Caco-2 (cell line): ENCODE measurements at regions of chr18 and their contacts with region 1.

Region 1: DNA sequence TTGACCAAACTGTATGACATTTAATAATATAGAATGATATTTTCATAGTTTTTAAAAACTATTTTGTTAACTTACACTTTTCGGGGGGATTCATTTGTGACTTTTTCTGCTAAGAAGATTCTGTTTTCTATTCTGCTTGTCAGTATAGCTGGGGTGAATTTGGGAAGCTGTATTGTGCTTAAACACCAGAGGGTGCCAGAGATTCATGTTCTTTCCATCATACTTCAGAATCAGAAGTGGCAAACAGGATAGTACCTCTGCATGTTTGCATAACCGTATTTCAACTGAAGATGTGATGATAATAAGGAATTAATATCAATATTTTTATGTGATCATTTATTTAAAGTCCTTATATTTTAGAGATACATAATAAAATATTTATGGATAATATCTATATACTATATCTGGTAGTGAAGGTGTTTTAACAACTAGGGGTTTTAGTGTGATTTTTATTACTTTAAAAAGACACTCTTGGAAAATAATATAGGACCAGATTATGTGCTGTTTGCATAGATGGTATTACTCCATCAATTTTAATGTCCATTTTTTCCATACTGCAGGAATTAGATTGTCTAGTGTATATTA is 81.0 kb downstream of the TAF4B start:
- DNase-seq: peak in 1 of 2 experiments; percentile 34
- H3K4me3 ChIP-seq: no peak overlapping the region
- H3K4me3 Mint-ChIP-seq: no peak overlapping the region
- H3K27ac Mint-ChIP-seq: no peak overlapping the region
- H3K4me1 ChIP-seq: no peaks in the 10 kb centered on the region
- H3K4me1 Mint-ChIP-seq: no peaks in the 10 kb centered on the region
- H3K27me3 ChIP-seq: no peaks in the 10 kb centered on the region
- H3K27me3 Mint-ChIP-seq: no peaks in the 10 kb centered on the region
- CTCF ChIP-seq: peak; percentile 34 to 43

Region 2: GRCh38 chr18:26268454-26268853 is 38.8 kb before region 1 on chr18:
- CTCF ChIA-PET with region 1: no interaction called
- POLR2A ChIA-PET with region 1: no interaction called
- intact Hi-C with region 1: no loop called
- DNase-seq: no peak
- H3K4me3 ChIP-seq: no peak overlapping the region
- H3K4me3 Mint-ChIP-seq: no peak overlapping the region
- H3K27ac Mint-ChIP-seq: no peak overlapping the region
- H3K4me1 ChIP-seq: no peaks in the 10 kb centered on the region
- H3K4me1 Mint-ChIP-seq: no peaks in the 10 kb centered on the region
- H3K27me3 ChIP-seq: no peaks in the 10 kb centered on the region
- H3K27me3 Mint-ChIP-seq: no peaks in the 10 kb centered on the region
- CTCF ChIP-seq: no peak

Region 3: GRCh38 chr18:26383454-26384270 is 76.4 kb after region 1 on chr18:
- CTCF ChIA-PET with region 1: no interaction called
- POLR2A ChIA-PET with region 1: no interaction called
- intact Hi-C with region 1: loop called (anchors 5 kb)
- DNase-seq: peak in 1 of 2 experiments; percentile 12
- H3K4me3 ChIP-seq: no peak overlapping the region
- H3K4me3 Mint-ChIP-seq: no peak overlapping the region
- H3K27ac Mint-ChIP-seq: no peak overlapping the region
- H3K4me1 ChIP-seq: peaks cover 12% of the 10 kb centered on the region; the same call in 1 of the 2 replicates
- H3K4me1 Mint-ChIP-seq: no peaks in the 10 kb centered on the region
- H3K27me3 ChIP-seq: no peaks in the 10 kb centered on the region
- H3K27me3 Mint-ChIP-seq: no peaks in the 10 kb centered on the region
- CTCF ChIP-seq: peak; percentile 43 to 53

Region 4: GRCh38 chr18:26458526-26459232 is 151.4 kb after region 1 on chr18:
- CTCF ChIA-PET with region 1: no interaction called
- POLR2A ChIA-PET with region 1: no interaction called
- intact Hi-C with region 1: loop called (anchors 5 kb)
- DNase-seq: no peak
- H3K4me3 ChIP-seq: no peak overlapping the region
- H3K4me3 Mint-ChIP-seq: no peak overlapping the region
- H3K27ac Mint-ChIP-seq: no peak overlapping the region
- H3K4me1 ChIP-seq: no peaks in the 10 kb centered on the region
- H3K4me1 Mint-ChIP-seq: no peaks in the 10 kb centered on the region
- H3K27me3 ChIP-seq: no peaks in the 10 kb centered on the region
- H3K27me3 Mint-ChIP-seq: no peaks in the 10 kb centered on the region
- CTCF ChIP-seq: no peak

Region 5: DNA sequence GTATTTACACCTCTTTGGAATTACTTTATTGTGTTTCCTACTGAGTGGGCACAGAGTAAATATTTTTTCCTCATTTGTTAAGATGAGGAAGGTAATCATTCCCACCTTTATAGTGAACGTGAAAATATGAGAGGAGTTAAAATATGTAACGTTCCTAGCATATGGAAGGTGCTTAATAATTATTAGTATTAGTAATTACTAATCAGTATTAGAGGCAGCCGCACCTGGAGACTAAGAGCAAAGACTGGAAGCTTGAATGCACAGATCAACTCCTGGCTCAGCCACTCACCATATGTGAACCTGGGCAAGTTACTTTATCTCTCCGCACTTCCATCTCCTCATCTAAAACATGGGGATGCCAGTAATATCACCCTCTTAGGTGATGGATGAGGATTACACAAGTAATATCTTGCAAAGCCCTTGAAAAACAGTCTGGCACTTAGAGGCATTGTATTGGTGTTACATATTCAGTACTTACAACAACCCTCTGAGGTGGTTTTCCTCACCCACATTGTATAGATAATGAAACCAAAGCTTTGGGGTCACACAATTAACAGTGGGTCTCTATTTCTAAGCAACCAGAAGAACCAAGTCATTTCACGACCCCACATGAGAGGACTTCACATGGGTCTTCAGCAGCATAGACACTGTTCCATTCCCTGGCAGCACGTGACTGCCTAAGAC is 341.4 kb after region 1 on chr18:
- CTCF ChIA-PET with region 1: interaction called, 3 read pairs
- POLR2A ChIA-PET with region 1: no interaction called
- intact Hi-C with region 1: loop called (anchors 2 kb)
- DNase-seq: no peak
- H3K4me3 ChIP-seq: no peak overlapping the region
- H3K4me3 Mint-ChIP-seq: no peak overlapping the region
- H3K27ac Mint-ChIP-seq: no peak overlapping the region
- H3K4me1 ChIP-seq: no peaks in the 10 kb centered on the region
- H3K4me1 Mint-ChIP-seq: no peaks in the 10 kb centered on the region
- H3K27me3 ChIP-seq: no peaks in the 10 kb centered on the region
- H3K27me3 Mint-ChIP-seq: peaks cover 13% of the 10 kb centered on the region
- CTCF ChIP-seq: no peak